ENCODE measurements at regions of chr12 and their contacts with region 1.

Region 1: GRCh38 chr12:106919910-106920544 is 35.7 kb upstream of the TMEM263 start:
- DNase-seq: no peak
- H3K4me3 Mint-ChIP-seq: no peak overlapping the region
- H3K27ac Mint-ChIP-seq: no peak overlapping the region
- H3K4me1 Mint-ChIP-seq: peaks cover 9% of the 10 kb centered on the region
- H3K27me3 Mint-ChIP-seq: peaks cover 19% of the 10 kb centered on the region

Region 2: GRCh38 chr12:106386813-106387535 is 533.1 kb before region 1 on chr12:
- CTCF ChIA-PET with region 1: interaction called, 24 read pairs
- POLR2A ChIA-PET with region 1: no interaction called
- DNase-seq: no peak
- H3K4me3 Mint-ChIP-seq: no peak overlapping the region
- H3K27ac Mint-ChIP-seq: no peak overlapping the region
- H3K4me1 Mint-ChIP-seq: peaks cover 5% of the 10 kb centered on the region
- H3K27me3 Mint-ChIP-seq: no peaks in the 10 kb centered on the region

Region 3: GRCh38 chr12:106907411-106907810 is 12.6 kb before region 1 on chr12:
- CTCF ChIA-PET with region 1: interaction called, 11 read pairs
- POLR2A ChIA-PET with region 1: no interaction called
- DNase-seq: no peak
- H3K4me3 Mint-ChIP-seq: no peak overlapping the region
- H3K27ac Mint-ChIP-seq: no peak overlapping the region
- H3K4me1 Mint-ChIP-seq: peaks cover 23% of the 10 kb centered on the region
- H3K27me3 Mint-ChIP-seq: peaks cover 27% of the 10 kb centered on the region

Measured in activated CD4-positive, alpha-beta memory T cell treated with anti-CD3 and anti-CD28 coated beads, Interleukin-2, amount 10 ng/mL, durations not matched to agents 7 days and 5 days (primary cell).